ENCODE measurements at regions of chr6 and their contacts with region 1.

Region 1: DNA sequence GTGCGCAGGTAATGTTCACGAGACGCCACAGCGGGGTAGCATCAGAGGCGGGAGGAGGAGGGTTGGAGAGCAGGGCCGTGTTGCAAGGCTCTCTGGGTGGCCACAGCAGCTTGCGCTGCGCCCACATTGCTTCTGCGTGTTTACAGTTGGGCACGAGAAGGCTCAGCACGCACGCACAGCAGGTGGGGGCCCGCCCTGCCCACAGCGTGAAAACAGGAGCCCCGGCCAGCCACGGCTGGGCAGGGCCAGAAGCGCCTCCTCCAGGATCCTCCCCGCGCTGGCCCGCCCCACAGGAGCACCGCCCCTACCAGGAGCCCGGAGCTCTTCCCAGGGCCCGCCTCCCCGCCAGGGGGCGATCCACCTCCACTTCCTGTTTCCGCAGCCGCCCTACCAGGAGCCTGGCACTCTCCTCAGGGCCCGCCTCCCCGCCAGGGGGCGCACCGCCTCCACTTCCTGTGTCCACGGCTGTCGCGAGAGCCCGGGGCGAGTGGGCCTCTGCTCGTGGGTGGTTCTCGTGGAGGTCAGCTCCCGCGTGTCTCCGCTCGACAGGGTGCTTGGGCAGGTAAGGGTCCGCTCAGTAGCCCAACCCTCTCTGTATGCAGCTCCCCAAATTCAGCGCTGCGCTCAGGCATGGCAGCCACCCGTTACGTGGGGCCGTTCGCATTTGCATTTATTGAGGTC is at the start of gene FAM50B:
- DNase-seq: peak; percentile 94
- ATAC-seq: peak; percentile 98
- H3K4me3 Mint-ChIP-seq: peak within 1 kb of the TSS; percentile 71
- H3K27ac Mint-ChIP-seq: peak within 1 kb of the TSS; percentile 78
- H3K4me1 Mint-ChIP-seq: peaks cover 17% of the 10 kb centered on the region
- H3K27me3 Mint-ChIP-seq: no peaks in the 10 kb centered on the region
- total RNA-seq, gene FAM50B: 7.6 to 8.6 TPM

Region 2: GRCh38 chr6:3873051-3873450 is 24.0 kb after region 1 on chr6:
- CTCF ChIA-PET with region 1: interaction called, 10 read pairs
- POLR2A ChIA-PET with region 1: no interaction called
- DNase-seq: no peak
- ATAC-seq: no peak
- H3K4me3 Mint-ChIP-seq: no peak overlapping the region
- H3K27ac Mint-ChIP-seq: no peak overlapping the region
- H3K4me1 Mint-ChIP-seq: peaks cover 3% of the 10 kb centered on the region
- H3K27me3 Mint-ChIP-seq: peaks cover 2% of the 10 kb centered on the region

Region 3: DNA sequence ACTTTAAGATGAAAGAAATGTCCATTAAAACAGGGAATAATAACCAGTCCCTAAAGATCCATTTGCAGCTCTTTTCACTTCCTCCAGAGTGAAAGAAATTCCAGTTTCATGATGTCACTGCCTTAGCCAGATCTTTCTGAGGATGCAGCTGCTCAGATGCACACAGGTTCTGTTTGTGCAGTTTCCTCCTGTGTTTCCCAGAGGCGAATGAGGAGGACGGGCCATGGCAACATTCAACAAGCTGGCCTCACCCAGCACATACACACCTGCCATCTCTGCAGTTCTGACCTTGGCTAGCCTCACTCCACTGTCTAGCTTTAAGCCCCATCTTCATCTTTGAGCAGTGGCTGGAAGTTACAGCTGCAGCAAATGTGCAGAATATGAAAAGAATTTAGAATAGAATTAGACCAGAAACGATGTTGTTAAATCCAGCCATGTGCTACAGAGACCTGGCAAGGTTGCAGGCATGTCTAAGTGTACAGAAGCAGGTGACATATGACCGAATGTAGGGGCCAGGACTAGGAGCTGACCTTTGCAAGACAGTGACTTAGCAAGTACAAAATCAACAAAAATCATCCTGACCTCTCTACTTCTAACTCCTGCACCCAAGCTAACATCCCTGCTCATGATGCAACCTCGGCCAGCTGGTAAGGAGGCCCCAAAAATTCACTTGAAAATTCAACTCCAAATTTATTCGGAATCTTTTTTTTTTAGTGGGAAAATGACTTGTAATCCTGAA is 35.1 kb after region 1 on chr6:
- CTCF ChIA-PET with region 1: interaction called, 13 read pairs
- POLR2A ChIA-PET with region 1: no interaction called
- DNase-seq: no peak
- ATAC-seq: no peak
- H3K4me3 Mint-ChIP-seq: no peak overlapping the region
- H3K27ac Mint-ChIP-seq: no peak overlapping the region
- H3K4me1 Mint-ChIP-seq: no peaks in the 10 kb centered on the region
- H3K27me3 Mint-ChIP-seq: no peaks in the 10 kb centered on the region

Region 4: GRCh38 chr6:3929281-3929798 is 80.3 kb after region 1 on chr6:
- CTCF ChIA-PET with region 1: interaction called, 31 read pairs
- POLR2A ChIA-PET with region 1: no interaction called
- DNase-seq: no peak
- ATAC-seq: no peak
- H3K4me3 Mint-ChIP-seq: no peak overlapping the region
- H3K27ac Mint-ChIP-seq: no peak overlapping the region
- H3K4me1 Mint-ChIP-seq: no peaks in the 10 kb centered on the region
- H3K27me3 Mint-ChIP-seq: peaks cover 5% of the 10 kb centered on the region

Region 5: DNA sequence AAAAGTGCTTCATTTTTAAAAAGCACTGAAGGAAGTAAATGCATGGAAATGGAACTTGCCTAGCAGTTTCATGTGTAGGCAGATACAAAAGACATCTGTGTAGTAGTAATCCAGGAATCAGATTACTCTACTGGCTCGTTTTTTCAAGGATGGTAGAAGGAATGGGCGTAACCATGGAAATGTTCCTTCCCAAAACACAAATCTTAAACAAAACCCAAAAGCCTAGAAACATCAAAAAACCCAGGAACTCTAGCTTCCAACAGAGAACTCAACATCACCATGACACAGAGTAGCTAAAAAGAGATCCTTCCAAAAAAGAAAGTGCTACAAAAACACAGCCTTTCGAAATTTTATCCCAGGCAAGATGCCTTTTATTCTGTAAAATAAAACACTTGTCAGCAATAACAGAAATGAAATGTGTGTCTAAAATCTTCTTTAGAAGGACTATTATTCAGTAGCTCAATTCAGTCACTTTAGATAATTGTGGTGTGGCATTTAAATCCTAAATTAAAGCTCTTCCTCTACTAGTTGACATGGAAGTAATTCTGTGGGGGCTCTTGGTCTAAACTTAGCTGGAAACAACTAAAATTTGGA is 148.2 kb after region 1 on chr6:
- CTCF ChIA-PET with region 1: interaction called, 11 read pairs
- POLR2A ChIA-PET with region 1: no interaction called
- DNase-seq: no peak
- ATAC-seq: no peak
- H3K4me3 Mint-ChIP-seq: no peak overlapping the region
- H3K27ac Mint-ChIP-seq: no peak overlapping the region
- H3K4me1 Mint-ChIP-seq: no peaks in the 10 kb centered on the region
- H3K27me3 Mint-ChIP-seq: no peaks in the 10 kb centered on the region

Region 6: DNA sequence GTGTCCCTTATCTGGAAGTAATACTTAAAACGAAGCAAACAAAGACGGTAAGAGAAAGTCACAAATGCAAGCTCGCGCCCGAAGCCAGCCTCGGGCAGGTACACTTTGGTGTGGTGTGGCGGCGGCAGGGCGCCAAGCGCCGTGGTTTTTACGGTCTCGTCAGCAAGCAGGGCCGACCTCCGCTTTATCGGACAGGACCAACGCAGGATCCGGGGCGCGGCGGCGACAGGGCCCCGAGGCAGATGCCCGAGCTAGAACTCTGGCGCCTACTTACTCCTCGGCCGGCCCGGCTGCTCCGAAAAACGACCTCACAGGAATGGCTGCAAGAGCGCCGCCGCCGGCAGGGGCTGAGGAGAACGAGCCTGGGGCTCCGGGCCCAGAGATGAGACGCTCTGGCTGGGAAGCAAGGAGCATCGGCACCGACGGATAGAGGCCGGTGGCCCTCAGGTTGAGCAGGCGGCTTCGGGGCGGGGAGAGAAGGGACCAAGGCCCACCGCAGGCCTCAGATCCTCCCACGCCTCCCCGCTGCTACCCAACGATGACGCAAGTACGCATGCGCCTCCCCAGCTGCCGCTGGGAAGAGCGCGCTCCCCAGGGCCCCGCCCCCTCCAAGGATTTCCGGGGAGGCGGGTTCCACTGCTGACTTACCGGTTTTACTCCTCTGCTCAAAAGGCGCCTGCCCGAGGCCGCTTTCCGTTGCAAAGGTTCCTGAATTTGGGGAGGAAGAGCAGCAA is 169.3 kb after region 1 on chr6:
- CTCF ChIA-PET with region 1: interaction called, 11 read pairs
- POLR2A ChIA-PET with region 1: no interaction called
- DNase-seq: peak; percentile 96
- ATAC-seq: peak; percentile 66
- H3K4me3 Mint-ChIP-seq: peak overlapping the region; percentile 92
- H3K27ac Mint-ChIP-seq: peak overlapping the region; percentile 98
- H3K4me1 Mint-ChIP-seq: peaks cover 58% of the 10 kb centered on the region
- H3K27me3 Mint-ChIP-seq: no peaks in the 10 kb centered on the region

Measured in activated CD8-positive, alpha-beta T cell treated with anti-CD3 and anti-CD28 coated beads, Interleukin-2, amount 10 ng/mL, durations not matched to agents 7 days and 5 days (primary cell).